GM12878 (cell line): ENCODE measurements at regions of chr7 and their contacts with region 1.

Region 1: GRCh38 chr7:142024547-142024946 is 28.9 kb downstream of the MGAM start:
- DNase-seq: no peak
- ATAC-seq: no peak
- H3K4me3 ChIP-seq: no peak overlapping the region
- H3K27ac ChIP-seq: no peak overlapping the region
- H3K4me1 ChIP-seq: no peaks in the 10 kb centered on the region
- H3K27me3 ChIP-seq: no peaks in the 10 kb centered on the region
- CTCF ChIP-seq: no peak
- EP300 ChIP-seq: no peak
- POLR2A ChIP-seq: no peak
- RAD21 ChIP-seq: no peak

Region 2: DNA sequence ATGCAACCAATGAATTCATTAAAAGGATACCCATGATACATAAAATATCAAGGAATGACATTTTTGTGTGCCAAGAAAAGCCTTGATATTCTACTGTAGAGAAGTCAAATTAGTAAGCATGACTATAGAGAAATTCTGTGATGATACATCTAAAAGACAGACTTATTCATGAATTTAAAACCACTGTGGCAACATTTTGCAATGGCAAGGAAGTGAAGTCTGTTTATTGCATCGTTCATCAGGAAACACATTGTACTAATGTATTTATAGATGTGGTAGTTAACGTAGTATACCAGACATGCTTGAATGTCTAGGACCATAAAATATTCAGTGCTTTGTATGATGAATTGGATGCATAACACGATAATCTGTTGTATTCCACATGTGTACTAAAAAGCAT is 68.5 kb before region 1 on chr7:
- CTCF ChIA-PET with region 1: no interaction called
- POLR2A ChIA-PET with region 1: no interaction called
- RAD21 ChIA-PET with region 1: no interaction called
- SMC1A ChIA-PET with region 1: no interaction called
- in situ Hi-C with region 1: no loop called
- intact Hi-C with region 1: no loop called
- DNase-seq: no peak
- ATAC-seq: no peak
- H3K4me3 ChIP-seq: no peak overlapping the region
- H3K27ac ChIP-seq: no peak overlapping the region
- H3K4me1 ChIP-seq: no peaks in the 10 kb centered on the region
- H3K27me3 ChIP-seq: no peaks in the 10 kb centered on the region
- CTCF ChIP-seq: no peak
- EP300 ChIP-seq: no peak
- POLR2A ChIP-seq: no peak
- RAD21 ChIP-seq: no peak

Region 3: GRCh38 chr7:142098004-142098403 is 73.5 kb after region 1 on chr7:
- CTCF ChIA-PET with region 1: no interaction called
- POLR2A ChIA-PET with region 1: no interaction called
- RAD21 ChIA-PET with region 1: no interaction called
- SMC1A ChIA-PET with region 1: no interaction called
- in situ Hi-C with region 1: no loop called
- intact Hi-C with region 1: loop called (anchors 2 kb)
- DNase-seq: no peak
- ATAC-seq: no peak
- H3K4me3 ChIP-seq: no peak overlapping the region
- H3K27ac ChIP-seq: no peak overlapping the region
- H3K4me1 ChIP-seq: no peaks in the 10 kb centered on the region
- H3K27me3 ChIP-seq: no peaks in the 10 kb centered on the region; a peak in 1 of 4 replicates
- CTCF ChIP-seq: no peak
- EP300 ChIP-seq: no peak
- POLR2A ChIP-seq: no peak
- RAD21 ChIP-seq: no peak